ENCODE measurements at regions of chr3 and their contacts with region 1.

Region 1: DNA sequence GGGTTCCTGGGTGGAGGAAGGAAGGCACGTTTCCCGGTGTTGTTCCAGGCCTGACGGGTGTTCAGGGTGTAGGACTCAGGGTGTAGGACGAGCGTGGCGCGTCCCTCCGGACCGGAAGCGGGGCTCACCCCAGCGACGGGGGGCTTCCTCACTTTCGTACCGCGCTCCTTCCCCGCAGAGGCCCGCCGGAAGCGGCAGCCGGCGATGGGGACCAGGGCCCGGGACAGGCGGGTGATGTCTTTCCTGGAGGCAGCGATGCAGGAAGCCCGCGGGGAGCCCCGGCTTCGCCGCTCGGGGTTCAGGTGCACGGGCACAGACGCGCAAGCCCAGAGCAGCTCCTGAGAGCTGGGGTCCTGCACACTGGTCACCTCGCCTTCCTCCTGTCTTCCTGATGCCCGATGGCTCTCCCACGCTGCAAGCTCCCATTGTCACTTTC is 13.4 kb downstream of the FOXL2NB start:
- DNase-seq: no peak
- ATAC-seq: peak in 1 of 4 experiments; percentile 37
- H3K4me3 ChIP-seq: peak overlapping the region in 1 of 2 donors; percentile 4
- H3K4me3 Mint-ChIP-seq: peak overlapping the region; percentile 7 to 63 (median 13)
- H3K27ac ChIP-seq: no peak overlapping the region
- H3K27ac Mint-ChIP-seq: no peak overlapping the region
- H3K4me1 ChIP-seq: peaks cover 0 to 13% of the 10 kb centered on the region in 2 experiments
- H3K4me1 Mint-ChIP-seq: peaks cover 18 to 27% (median 19%) of the 10 kb centered on the region in 3 donors
- H3K27me3 ChIP-seq: peaks cover 5 to 47% of the 10 kb centered on the region in 2 experiments
- H3K27me3 Mint-ChIP-seq: peaks cover 64 to 66% of the 10 kb centered on the region in 2 donors

Region 2: GRCh38 chr3:138946181-138947059 is 14.0 kb before region 1 on chr3:
- CTCF ChIA-PET with region 1: interaction called in 1 of 2 experiments, 10 read pairs
- POLR2A ChIA-PET with region 1: no interaction called
- DNase-seq: peak in 1 of 35 experiments; percentile 40
- ATAC-seq: peak in 2 of 4 experiments; percentile 4 to 24
- H3K4me3 ChIP-seq: peak overlapping the region; percentile 26 to 59
- H3K4me3 Mint-ChIP-seq: peak overlapping the region; percentile 61 to 80 (median 64)
- H3K27ac ChIP-seq: no peak overlapping the region
- H3K27ac Mint-ChIP-seq: no peak overlapping the region
- H3K4me1 ChIP-seq: peaks cover 22 to 54% of the 10 kb centered on the region in 2 experiments
- H3K4me1 Mint-ChIP-seq: peaks cover 35 to 55% (median 42%) of the 10 kb centered on the region in 3 donors
- H3K27me3 ChIP-seq: peaks cover 31 to 81% of the 10 kb centered on the region in 2 experiments
- H3K27me3 Mint-ChIP-seq: peaks cover 66 to 81% of the 10 kb centered on the region in 2 donors

Measured in T-cell (primary cell).